Esophagus squamous epithelium (tissue), 5 donors: ENCODE measurements at regions of chr1 and their contacts with region 1.

Region 1: DNA sequence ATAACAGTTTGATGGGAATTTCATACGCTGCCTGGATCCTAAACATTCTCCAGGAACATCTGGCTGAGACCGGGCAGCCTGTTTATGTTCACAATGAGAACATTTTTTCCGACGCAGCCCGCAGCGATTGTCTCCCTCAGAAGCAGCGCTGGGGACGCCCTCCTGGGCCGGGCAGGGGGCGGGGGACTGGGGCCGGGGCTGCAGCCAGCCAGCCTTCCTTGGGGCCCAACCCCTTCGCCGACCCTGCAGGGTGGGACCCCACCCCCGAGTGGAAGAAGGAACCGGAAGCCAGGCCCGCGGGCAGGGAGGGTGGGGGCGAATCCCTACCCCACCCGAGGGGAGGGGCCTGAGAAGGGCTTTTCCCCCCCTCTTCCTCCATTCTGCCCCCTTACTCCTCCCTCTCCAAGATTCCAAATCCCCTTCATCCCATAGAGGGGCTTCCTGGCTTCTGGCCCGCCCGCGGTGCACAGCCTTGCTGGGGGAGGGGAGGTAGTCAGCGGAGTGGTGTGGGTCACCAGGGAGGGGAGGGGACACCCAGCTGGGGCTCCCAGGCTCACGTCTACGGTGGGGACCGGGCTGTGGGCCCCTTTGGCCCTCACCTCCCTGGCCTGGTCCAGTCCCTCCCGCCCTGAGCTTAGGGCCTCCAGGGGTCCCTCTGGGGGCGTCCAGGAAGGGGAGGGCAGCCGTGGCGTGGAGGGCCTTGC is 60.6 kb downstream of the WNT9A start:
- DNase-seq: no peak
- H3K4me3 ChIP-seq: peak overlapping the region; percentile 23 to 74 (median 51)
- H3K27ac ChIP-seq: peak overlapping the region; percentile 83 to 92 (median 88)
- H3K4me1 ChIP-seq: peaks cover 27 to 56% (median 30%) of the 10 kb centered on the region in 3 donors
- H3K27me3 ChIP-seq: no peaks in the 10 kb centered on the region
- CTCF ChIP-seq: no peak
- POLR2A ChIP-seq: no peak

Region 2: GRCh38 chr1:227762233-227762911 is 124.8 kb before region 1 on chr1:
- intact Hi-C with region 1: loop called (anchors 10 kb)
- DNase-seq: peak; percentile 21
- H3K4me3 ChIP-seq: no peak overlapping the region
- H3K27ac ChIP-seq: peak overlapping the region; percentile 0 to 26 (median 20)
- H3K4me1 ChIP-seq: peaks cover 20 to 46% (median 32%) of the 10 kb centered on the region in 3 donors
- H3K27me3 ChIP-seq: peaks cover 0 to 10% (median 0%) of the 10 kb centered on the region in 4 donors
- CTCF ChIP-seq: peak; percentile 82 to 93 (median 88)
- POLR2A ChIP-seq: no peak